ENCODE measurements at regions of chr18 and their contacts with region 1.

Region 1: DNA sequence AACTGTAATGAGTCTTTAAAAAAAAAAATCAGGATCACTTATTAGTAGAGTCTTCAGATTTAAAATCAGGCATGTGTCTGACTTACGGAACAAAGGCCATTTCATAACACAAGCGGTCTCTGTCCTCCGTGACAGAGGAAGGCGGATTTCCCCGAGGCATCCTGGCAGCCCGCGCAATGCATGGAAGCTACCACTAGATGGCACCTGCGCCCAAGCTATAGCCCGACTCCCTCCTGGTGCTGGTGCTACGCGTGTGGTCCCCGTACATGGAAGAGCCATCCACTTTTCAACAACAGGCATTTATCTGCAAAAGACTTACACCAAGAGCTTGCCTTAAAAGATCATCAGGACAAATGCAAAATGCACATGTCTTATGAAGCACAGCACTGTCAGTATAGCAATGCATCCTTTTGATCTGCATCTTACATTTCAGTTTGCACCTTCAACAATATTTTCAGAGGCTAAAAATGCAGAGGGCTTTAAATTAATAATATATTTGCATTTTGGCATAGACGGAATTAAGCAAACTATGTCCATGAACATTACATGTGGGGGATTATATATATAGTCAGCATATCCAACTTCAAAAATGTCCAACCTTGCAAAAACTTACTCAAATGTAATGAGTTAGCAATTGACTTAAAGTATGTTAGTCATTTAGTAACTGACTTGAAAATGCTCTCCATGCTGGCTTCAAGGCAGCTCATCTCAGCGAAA is 96.0 kb downstream of the ZNF516 start:
- DNase-seq: peak; percentile 62
- ATAC-seq: peak; percentile 93
- H3K4me3 ChIP-seq: no peak overlapping the region
- H3K27ac ChIP-seq: no peak overlapping the region
- H3K4me1 ChIP-seq: peaks cover 9% of the 10 kb centered on the region; the same call in 1 of the 2 replicates
- H3K27me3 ChIP-seq: no peaks in the 10 kb centered on the region
- CTCF ChIP-seq: peak; percentile 97
- EP300 ChIP-seq: no peak
- POLR2A ChIP-seq: no peak
- RAD21 ChIP-seq: peak; percentile 92

Region 2: GRCh38 chr18:76349067-76349715 is 49.9 kb before region 1 on chr18:
- CTCF ChIA-PET with region 1: no interaction called
- POLR2A ChIA-PET with region 1: no interaction called
- in situ Hi-C with region 1: no loop called
- intact Hi-C with region 1: no loop called
- DNase-seq: peak; percentile 67
- ATAC-seq: peak; percentile 11
- H3K4me3 ChIP-seq: peak overlapping the region; percentile 20 to 69 (median 41); a peak in 5 of 6 replicates
- H3K27ac ChIP-seq: no peak overlapping the region
- H3K4me1 ChIP-seq: peaks cover 49% of the 10 kb centered on the region
- H3K27me3 ChIP-seq: peaks cover 0 to 18% of the 10 kb centered on the region in 2 experiments; a peak in 3 of 5 replicates
- CTCF ChIP-seq: peak; percentile 90
- EP300 ChIP-seq: no peak
- POLR2A ChIP-seq: no peak
- RAD21 ChIP-seq: peak; percentile 58; the same call in 1 of the 2 replicates

Region 3: DNA sequence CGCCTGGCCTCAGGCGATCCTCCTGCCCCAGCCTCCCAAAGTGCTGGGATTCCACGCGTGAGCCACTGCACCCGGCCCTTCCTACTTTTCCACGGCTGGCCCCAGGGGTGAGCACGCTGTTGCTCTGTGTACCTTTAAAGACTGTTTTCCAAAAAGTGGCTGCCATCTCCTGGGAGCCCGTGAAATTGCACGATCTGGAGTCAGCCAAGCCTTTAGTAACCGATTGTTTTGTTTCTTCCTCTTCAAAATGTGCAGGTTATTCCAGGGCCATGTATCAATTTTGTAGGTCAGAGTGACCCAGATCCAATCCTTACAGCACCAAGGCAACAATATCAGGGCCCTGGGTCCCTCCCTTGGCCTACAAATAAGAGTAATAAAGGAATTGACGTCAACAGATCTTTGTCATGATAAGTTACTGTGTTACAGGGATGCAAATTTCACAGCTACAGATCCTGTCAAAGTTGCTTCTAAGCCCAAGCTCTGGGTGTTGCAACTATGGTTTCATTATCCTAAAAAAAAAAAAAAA is 287.7 kb after region 1 on chr18:
- CTCF ChIA-PET with region 1: interaction called, 17 read pairs
- POLR2A ChIA-PET with region 1: no interaction called
- in situ Hi-C with region 1: loop called (anchors 5 kb)
- intact Hi-C with region 1: loop called (anchors 1 kb)
- DNase-seq: peak; percentile 48
- ATAC-seq: peak; percentile 92
- H3K4me3 ChIP-seq: no peak overlapping the region
- H3K27ac ChIP-seq: no peak overlapping the region
- H3K4me1 ChIP-seq: no peaks in the 10 kb centered on the region
- H3K27me3 ChIP-seq: peaks cover 0 to 59% of the 10 kb centered on the region in 2 experiments; a peak in 4 of 5 replicates
- CTCF ChIP-seq: peak; percentile 77
- EP300 ChIP-seq: no peak
- POLR2A ChIP-seq: no peak
- RAD21 ChIP-seq: peak; percentile 43; the same call in 1 of the 2 replicates

Region 4: DNA sequence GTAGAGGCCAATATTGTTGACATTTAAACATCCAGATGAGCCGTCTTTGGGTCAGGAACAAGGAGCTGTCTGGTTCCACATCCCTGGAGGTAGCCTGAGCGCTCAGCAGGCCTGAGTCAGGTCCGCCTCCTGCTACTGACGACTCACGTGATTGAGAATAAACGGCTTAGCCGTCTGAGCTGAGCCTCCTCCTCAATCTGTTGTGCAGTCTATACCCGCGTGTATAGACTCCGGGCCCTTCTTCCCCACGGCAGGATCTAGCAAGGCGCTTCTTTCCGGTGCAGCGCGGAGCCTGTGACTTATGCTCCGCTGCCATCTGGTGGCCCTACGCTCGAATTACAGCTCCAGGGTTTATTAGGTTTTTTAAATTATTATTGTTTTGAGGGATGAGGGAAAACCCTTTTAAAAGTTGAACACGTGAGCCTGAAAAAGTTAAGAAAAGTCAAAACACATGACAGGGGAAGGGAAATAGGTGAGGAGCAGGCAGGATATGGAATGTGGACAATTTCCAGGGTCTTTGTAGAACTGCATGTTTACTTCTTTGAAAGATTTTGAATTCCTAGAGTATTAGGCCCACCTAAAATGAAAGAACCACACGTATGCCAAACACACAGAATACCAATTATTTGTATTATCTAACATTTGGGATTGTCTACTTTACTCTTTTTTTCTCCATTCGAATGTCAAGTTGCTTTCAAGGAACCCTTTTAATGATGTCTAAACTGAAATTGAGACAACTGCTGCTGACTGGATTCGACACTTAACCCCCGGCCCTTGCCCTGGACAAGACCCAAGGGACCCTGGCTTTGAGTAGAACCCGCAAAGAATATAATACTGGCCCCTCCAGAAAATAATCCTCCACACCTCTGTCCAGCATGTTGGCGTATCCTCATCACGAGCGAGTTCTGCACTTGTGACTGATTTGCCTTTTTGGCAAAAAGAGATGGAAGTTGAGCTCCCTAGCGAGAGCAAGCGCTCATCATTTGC is 310.9 kb after region 1 on chr18:
- CTCF ChIA-PET with region 1: interaction called, 15 read pairs
- POLR2A ChIA-PET with region 1: no interaction called
- in situ Hi-C with region 1: no loop called
- intact Hi-C with region 1: loop called (anchors 1 kb)
- DNase-seq: peak; percentile 33
- ATAC-seq: peak; percentile 82
- H3K4me3 ChIP-seq: peak overlapping the region in 1 of 3 experiments; percentile 27; a peak in 1 of 6 replicates
- H3K27ac ChIP-seq: no peak overlapping the region
- H3K4me1 ChIP-seq: no peaks in the 10 kb centered on the region
- H3K27me3 ChIP-seq: peaks cover 4 to 54% of the 10 kb centered on the region in 2 experiments
- CTCF ChIP-seq: peak; percentile 88
- EP300 ChIP-seq: no peak
- POLR2A ChIP-seq: no peak
- RAD21 ChIP-seq: peak; percentile 88

Region 5: DNA sequence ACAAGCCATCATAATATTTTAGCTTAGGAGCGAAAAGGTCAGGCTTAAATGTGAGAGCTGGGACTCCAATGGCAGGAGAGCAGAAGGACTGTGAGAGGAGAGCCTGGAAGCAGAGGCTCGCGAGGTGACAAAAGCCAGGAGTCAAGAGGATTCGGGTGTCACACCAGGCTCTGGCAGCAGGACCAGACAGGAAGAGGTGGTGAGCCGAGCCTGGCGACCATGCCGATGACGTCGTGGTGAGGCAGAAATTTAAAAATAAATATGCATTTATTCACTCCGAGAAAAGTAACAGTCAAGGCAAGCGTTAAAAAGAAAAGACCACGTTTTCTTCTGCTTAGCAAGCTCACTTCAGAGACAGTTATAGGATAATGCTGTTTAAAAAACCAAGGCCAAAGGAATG is 392.1 kb after region 1 on chr18:
- CTCF ChIA-PET with region 1: no interaction called
- POLR2A ChIA-PET with region 1: no interaction called
- in situ Hi-C with region 1: no loop called
- intact Hi-C with region 1: no loop called
- DNase-seq: no peak
- ATAC-seq: no peak
- H3K4me3 ChIP-seq: no peak overlapping the region
- H3K27ac ChIP-seq: no peak overlapping the region
- H3K4me1 ChIP-seq: no peaks in the 10 kb centered on the region
- H3K27me3 ChIP-seq: peaks cover 0 to 15% of the 10 kb centered on the region in 2 experiments; a peak in 2 of 5 replicates
- CTCF ChIP-seq: no peak
- EP300 ChIP-seq: no peak
- POLR2A ChIP-seq: no peak
- RAD21 ChIP-seq: no peak